Activated naive CD4-positive, alpha-beta T cell treated with anti-CD3 and anti-CD28 coated beads for 36 hours (primary cell): ENCODE measurements at regions of chr22 and their contacts with region 1.

Region 1: DNA sequence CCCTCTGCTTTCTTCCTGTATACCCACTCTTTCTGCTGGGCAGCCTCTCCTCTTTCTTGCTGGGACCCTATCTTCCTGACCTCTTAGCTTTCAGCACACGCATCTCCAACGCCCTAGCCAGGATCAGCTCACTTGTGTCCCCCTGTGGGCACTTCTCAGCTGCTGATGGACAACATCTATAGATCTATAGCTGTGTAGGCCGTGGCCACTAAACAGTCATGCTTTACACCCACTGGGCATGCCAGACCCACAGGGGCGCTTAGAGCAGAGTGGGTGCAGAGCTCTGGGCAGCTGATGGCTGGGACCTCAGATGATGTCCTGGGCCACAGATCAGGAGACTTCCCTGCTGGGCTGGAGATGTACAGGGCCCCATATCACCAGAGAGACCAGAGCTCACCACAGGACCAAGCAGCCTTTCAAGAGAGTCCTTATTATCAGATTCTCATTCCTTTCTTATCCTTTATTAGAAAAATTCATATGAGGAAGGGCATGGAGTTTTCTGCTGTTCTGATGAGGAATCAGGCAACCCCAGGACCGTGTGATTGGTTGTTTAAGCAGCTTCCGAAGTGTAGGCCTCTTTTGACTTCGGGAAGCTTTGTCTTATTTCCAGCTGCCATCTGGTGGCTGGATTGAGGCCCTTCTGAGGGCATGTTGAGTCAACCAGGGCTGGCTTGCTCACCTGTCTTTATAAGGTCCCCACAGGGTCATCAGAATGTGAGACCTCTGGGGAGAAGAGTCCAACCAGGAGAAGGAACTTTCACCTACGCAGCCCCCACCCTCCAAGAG is 60.5 kb downstream of the OSBP2 start:
- DNase-seq: peak; percentile 82
- H3K4me3 Mint-ChIP-seq: no peak overlapping the region
- H3K27ac Mint-ChIP-seq: no peak overlapping the region
- H3K4me1 Mint-ChIP-seq: no peaks in the 10 kb centered on the region
- H3K27me3 Mint-ChIP-seq: peaks cover 3% of the 10 kb centered on the region

Region 2: GRCh38 chr22:30444632-30445437 is 310.3 kb before region 1 on chr22:
- CTCF ChIA-PET with region 1: no interaction called
- intact Hi-C with region 1: loop called (anchors 2 kb)
- DNase-seq: peak; percentile 75
- H3K4me3 Mint-ChIP-seq: no peak overlapping the region
- H3K27ac Mint-ChIP-seq: no peak overlapping the region
- H3K4me1 Mint-ChIP-seq: peaks cover 10% of the 10 kb centered on the region
- H3K27me3 Mint-ChIP-seq: peaks cover 24% of the 10 kb centered on the region

Region 3: GRCh38 chr22:30606455-30607299 is 148.5 kb before region 1 on chr22 and contains the start of gene TCN2:
- CTCF ChIA-PET with region 1: interaction called, 18 read pairs
- intact Hi-C with region 1: no loop called
- DNase-seq: peak; percentile 78
- H3K4me3 Mint-ChIP-seq: peak within 1 kb of the TSS; percentile 74
- H3K27ac Mint-ChIP-seq: no peak within 1 kb of the TSS
- H3K4me1 Mint-ChIP-seq: peaks cover 33% of the 10 kb centered on the region
- H3K27me3 Mint-ChIP-seq: no peaks in the 10 kb centered on the region
- total RNA-seq, gene TCN2: 0.19 to 0.22 TPM

Region 4: DNA sequence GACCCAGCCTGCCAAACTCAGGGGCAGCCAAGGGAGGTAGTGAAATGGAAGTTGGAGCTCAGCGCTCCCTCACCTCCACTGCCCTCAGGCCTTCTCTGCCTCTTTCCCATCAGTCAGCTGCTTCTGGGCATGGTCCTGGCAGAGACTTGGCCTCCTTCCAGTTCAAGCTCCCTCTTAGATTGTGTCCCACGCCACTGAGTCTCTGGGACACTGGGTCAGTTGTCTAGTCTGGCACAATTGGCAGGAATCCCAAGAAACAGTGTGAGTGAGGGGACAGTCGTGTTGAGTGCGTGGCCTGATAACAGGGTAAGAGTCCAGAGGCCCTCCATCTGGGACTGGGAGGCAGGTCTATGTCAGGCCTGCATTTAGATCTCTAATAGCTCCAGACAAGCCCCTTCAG is 126.7 kb before region 1 on chr22:
- CTCF ChIA-PET with region 1: interaction called, 156 read pairs
- intact Hi-C with region 1: no loop called
- DNase-seq: no peak
- H3K4me3 Mint-ChIP-seq: no peak overlapping the region
- H3K27ac Mint-ChIP-seq: no peak overlapping the region
- H3K4me1 Mint-ChIP-seq: no peaks in the 10 kb centered on the region
- H3K27me3 Mint-ChIP-seq: no peaks in the 10 kb centered on the region

Region 5: DNA sequence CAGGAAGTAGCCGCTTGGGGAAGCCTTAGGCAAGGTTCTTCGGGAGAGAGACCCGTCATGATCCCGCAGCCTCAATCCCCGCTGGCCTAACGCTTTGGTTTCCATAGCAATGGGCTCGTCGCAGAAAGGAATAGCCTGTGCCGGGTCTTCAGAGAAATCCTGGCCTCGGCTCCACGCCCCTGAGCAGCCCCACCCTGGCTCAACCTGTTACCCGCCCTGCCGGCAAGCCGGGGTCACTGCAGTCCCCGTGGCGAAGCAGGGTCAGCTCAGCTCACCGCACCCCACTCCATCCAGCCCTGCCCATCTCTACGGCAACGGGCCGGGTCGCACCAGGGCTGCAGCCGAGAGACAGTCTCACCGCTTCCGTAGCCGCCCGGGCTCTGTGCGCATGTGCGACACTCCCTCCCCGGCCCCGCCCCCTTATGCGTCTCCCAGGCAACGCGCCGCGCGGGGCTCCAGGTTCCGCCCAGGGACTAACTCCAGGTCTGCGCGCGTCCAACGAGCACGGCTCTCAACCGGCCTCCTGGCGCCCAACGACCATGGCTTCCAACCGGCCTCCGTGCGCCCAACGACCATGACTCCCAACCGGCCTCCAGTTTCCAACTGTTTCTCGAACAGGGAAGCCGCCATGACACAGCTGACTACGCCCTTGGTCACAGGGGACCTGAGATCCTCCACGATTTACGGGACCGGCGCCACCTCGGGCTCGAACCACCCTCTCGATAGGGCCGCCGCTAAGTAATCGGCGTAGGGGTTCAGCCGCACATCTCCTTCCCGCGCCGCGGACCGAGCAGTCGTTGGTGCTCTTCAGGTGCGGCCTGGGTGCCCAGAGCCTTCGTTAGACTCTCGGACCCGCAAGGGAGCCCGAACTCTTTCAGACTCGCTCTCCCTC is 87.4 kb before region 1 on chr22 and contains the start of gene DUSP18:
- CTCF ChIA-PET with region 1: interaction called, 4 read pairs
- intact Hi-C with region 1: loop called (anchors 1 kb)
- DNase-seq: peak; percentile 94
- H3K4me3 Mint-ChIP-seq: peak within 1 kb of the TSS; percentile 98
- H3K27ac Mint-ChIP-seq: peak within 1 kb of the TSS; percentile 22
- H3K4me1 Mint-ChIP-seq: peaks cover 17% of the 10 kb centered on the region
- H3K27me3 Mint-ChIP-seq: no peaks in the 10 kb centered on the region
- total RNA-seq, gene DUSP18: 4.7 to 5.6 TPM

Region 6: GRCh38 chr22:30837531-30837930 is 82.4 kb after region 1 on chr22:
- CTCF ChIA-PET with region 1: no interaction called
- intact Hi-C with region 1: no loop called
- DNase-seq: no peak
- H3K4me3 Mint-ChIP-seq: no peak overlapping the region
- H3K27ac Mint-ChIP-seq: no peak overlapping the region
- H3K4me1 Mint-ChIP-seq: no peaks in the 10 kb centered on the region
- H3K27me3 Mint-ChIP-seq: no peaks in the 10 kb centered on the region

Region 7: GRCh38 chr22:30920407-30920806 is 165.2 kb after region 1 on chr22:
- CTCF ChIA-PET with region 1: interaction called, 11 read pairs
- intact Hi-C with region 1: no loop called
- DNase-seq: peak; percentile 90
- H3K4me3 Mint-ChIP-seq: peak overlapping the region; percentile 56
- H3K27ac Mint-ChIP-seq: no peak overlapping the region
- H3K4me1 Mint-ChIP-seq: peaks cover 7% of the 10 kb centered on the region
- H3K27me3 Mint-ChIP-seq: no peaks in the 10 kb centered on the region